Activated T-helper 1 cell treated with anti-CD3 and anti-CD28 coated beads, Interleukin-12 subunit alpha, Interleukin-12 subunit beta, Interleukin-2, Interleukin-4 antibody, amounts not matched to agents 30 ng/mL and 10 ng/mL and 1 ng/mL, durations not matched to agents 14 hours and 24 hours and 36 hours (primary cell): ENCODE measurements at regions of chr20 and their contacts with region 1.

Region 1: GRCh38 chr20:63864847-63865640 is at the start of gene TPD52L2:
- DNase-seq: peak; percentile 98
- H3K4me3 Mint-ChIP-seq: peak within 1 kb of the TSS; percentile 96
- H3K27ac Mint-ChIP-seq: peak within 1 kb of the TSS; percentile 96
- H3K4me1 Mint-ChIP-seq: peaks cover 19% of the 10 kb centered on the region
- H3K27me3 Mint-ChIP-seq: no peaks in the 10 kb centered on the region
- total RNA-seq, gene TPD52L2: 65.9 and 73.2 TPM in 2 replicates

Region 2: DNA sequence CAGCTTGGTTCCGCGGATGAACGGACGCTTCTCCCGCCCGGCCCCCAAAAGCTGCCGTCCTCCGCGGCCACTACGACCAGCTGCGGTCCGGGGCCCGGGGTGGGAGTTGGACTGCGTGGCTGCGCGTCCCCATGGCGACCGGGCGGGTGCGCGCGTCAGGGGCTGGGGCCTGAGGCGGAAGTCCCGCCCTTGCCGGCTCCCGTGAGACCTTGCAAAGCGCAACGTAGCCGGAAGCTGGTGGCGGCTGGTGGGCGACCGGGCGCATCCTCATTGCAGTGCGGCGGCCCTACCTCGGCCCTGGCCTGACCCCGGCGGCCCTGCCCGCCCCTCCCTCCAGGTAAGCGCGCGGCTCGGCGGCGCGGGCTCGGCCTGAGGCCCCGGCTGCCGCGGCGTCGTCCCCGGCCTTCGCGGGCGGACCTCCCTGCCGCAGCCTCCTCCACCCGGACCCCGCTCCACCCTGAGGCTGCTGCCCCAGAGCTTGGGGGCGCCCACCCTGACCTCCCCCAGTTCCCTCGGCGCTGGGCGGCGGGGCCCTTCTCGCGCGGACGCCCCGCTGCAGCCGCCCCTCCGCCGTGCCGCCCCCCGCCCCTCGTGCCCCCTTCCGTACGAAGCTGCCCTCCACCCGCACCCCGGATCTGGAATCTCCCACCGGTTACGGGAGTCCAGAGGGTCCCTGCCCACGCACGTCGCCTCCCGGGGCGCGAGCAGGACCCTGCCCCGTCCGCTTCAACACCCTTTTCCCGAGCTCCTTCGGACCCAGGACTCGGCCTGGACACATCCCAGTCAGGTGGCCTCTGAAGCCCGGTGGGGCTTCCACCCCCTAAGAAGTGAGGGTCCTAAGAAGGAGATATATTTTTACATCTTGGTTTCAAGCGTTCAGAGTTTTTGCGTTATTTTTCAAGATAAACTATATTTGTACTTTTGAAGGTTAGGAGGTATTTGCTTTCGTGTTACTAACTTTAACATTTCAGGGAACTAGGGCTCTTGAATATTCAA is 592.2 kb before region 1 on chr20 and contains the start of gene ARFGAP1:
- intact Hi-C with region 1: loop called (anchors 1 kb)
- DNase-seq: peak; percentile 86
- H3K4me3 Mint-ChIP-seq: peak within 1 kb of the TSS; percentile 98
- H3K27ac Mint-ChIP-seq: peak within 1 kb of the TSS; percentile 89
- H3K4me1 Mint-ChIP-seq: peaks cover 23% of the 10 kb centered on the region
- H3K27me3 Mint-ChIP-seq: peaks cover 3% of the 10 kb centered on the region
- total RNA-seq, gene ARFGAP1: 102 and 107 TPM in 2 replicates

Region 3: GRCh38 chr20:63553227-63553932 is 311.7 kb before region 1 on chr20:
- intact Hi-C with region 1: loop called (anchors 1 kb)
- DNase-seq: peak; percentile 86
- H3K4me3 Mint-ChIP-seq: peak overlapping the region; percentile 63
- H3K27ac Mint-ChIP-seq: peak overlapping the region; percentile 55
- H3K4me1 Mint-ChIP-seq: peaks cover 9% of the 10 kb centered on the region
- H3K27me3 Mint-ChIP-seq: peaks cover 19% of the 10 kb centered on the region

Region 4: DNA sequence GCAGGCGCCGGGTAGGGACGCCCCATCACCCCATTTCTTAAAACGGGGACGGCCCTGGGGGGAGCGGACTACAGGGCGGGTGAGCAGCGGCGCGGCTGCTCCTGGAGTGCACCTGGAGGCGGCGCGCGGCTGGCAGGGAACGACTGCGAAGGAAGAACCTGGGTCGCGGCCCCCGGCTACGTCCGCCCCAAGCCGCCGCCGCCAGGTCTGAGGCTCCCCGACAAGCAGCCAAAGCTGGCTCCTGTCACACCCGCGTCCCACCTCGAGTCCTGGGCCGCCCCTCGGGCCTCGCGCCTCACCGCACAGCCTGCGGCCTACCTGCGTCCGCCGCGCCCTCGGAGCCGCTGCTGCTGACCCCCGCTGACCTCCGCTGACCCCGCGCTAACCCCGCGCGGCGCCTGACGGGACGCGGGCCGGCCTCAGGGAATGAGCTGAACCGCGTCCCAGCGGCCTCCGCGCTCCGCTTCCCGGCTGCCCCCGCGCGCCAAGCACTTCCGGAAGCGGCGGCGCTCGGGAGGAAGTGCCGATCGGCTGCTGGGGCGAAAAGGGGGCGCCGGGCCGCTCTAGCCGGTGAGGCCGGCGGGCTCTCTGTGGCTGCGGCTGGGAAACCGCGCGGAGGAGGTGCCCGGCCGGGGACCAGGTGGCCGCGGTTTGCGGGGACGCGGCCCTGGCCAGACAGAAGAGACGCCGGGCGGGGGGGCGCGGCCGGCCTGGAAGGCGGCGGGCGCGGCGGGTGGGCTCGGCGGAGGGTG is 157.3 kb before region 1 on chr20 and contains the starts of genes ARFRP1 and ZGPAT:
- intact Hi-C with region 1: loop called (anchors 1 kb)
- DNase-seq: peak; percentile 88
- H3K4me3 Mint-ChIP-seq: peak within 1 kb of the TSS; percentile 94
- H3K27ac Mint-ChIP-seq: peak within 1 kb of the TSS; percentile 86
- H3K4me1 Mint-ChIP-seq: peaks cover 31% of the 10 kb centered on the region
- H3K27me3 Mint-ChIP-seq: no peaks in the 10 kb centered on the region
- total RNA-seq, gene ARFRP1: 71.8 and 73.5 TPM in 2 replicates
- total RNA-seq, gene ZGPAT: 34.5 and 36.7 TPM in 2 replicates

Region 5: DNA sequence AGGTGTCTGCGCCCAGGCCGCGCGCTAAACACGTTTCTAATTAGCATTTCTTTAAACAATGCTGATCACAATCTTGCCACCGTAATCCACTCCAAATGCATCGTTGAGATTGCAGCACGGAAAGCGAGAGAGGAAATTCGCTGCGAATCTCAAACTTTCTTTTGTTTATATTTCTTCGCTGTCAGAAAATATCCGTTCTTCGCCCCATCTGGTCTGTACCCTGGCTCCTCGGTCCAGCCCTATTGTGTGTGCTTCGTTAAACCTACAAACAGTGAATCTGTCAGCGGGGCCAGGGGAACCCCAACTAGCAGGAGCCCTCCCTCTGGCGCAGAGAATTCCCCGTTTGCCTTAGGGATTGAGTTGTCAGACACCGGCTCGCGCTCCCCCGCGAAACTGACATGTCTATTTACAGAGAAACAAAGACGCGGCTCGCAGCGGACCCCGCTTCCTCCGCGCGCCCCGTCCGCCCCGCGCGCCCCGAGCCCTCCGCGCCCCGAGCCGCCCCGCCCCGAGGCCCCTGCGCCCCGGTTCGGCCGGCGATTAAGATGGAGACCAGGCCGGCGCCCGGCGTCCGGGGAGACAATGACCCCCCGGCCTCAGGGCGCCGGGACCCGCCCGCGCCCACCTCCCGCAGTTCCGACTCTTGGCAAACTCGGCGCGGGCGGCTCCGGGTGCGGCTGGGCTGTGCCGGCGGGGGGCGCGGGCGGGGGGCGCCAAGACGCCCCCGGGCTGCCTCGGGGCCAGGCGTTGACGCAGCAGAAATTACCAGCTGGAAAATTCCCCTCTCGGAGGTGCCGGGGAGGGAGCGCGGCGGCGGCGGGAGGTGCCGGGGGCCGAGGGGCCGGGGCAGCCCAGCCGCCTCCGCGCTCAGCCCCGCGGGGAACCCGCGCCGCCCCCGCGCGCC is 34.9 kb before region 1 on chr20:
- intact Hi-C with region 1: loop called (anchors 2 kb)
- DNase-seq: no peak
- H3K4me3 Mint-ChIP-seq: peak overlapping the region; percentile 90
- H3K27ac Mint-ChIP-seq: peak overlapping the region; percentile 76
- H3K4me1 Mint-ChIP-seq: peaks cover 13% of the 10 kb centered on the region
- H3K27me3 Mint-ChIP-seq: peaks cover 45% of the 10 kb centered on the region

Region 6: GRCh38 chr20:63955827-63956663 is 91.0 kb after region 1 on chr20 and contains the start of gene UCKL1:
- intact Hi-C with region 1: loop called (anchors 1 kb)
- DNase-seq: peak; percentile 88
- H3K4me3 Mint-ChIP-seq: peak within 1 kb of the TSS; percentile 84
- H3K27ac Mint-ChIP-seq: peak within 1 kb of the TSS; percentile 93
- H3K4me1 Mint-ChIP-seq: peaks cover 19% of the 10 kb centered on the region
- H3K27me3 Mint-ChIP-seq: no peaks in the 10 kb centered on the region
- total RNA-seq, gene UCKL1: 48.7 and 49.3 TPM in 2 replicates